Activated CD4-positive, alpha-beta memory T cell treated with anti-CD3 and anti-CD28 coated beads for 36 hours (primary cell): ENCODE measurements at regions of chrX and their contacts with region 1.

Region 1: DNA sequence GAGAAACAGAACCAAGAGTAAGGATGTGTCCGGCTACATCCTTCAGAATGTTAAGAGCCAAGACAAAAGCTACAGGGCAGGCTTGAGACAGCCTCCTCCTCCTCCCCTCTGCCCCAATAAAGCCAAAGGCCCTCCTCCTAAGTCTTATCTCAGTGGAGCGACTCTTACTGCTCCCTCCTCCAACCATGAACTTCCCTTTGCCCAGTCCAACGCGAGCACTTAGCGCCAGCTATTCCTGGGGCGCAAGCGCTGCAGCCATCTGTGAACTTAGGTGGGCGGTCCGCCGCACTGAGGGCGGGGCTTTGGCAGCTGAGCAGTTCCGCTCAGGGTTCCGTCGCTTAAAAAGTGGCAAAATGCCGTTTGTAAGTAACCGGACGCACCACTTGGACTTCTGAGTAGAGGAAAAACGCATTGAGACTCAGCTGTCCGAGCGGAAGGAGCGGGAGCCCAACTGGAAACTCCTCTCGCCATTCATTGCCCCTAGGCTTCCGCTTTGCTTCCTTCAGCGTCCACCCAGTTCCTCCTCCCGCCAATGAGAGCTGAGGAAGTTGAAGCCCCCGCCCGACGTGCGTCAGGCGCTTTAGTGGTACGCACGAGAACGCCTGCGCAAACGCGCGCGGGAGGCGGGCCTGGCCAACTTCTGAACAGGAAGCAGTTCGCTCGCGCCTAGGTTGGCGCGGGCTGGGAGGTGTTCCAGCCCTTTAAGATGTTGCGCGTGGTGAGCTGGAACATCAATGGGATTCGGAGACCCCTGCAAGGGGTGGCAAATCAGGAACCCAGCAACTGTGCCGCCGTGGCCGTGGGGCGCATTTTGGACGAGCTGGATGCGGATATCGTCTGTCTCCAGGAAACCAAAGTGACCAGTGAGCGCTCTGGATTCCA is at the start of gene APEX2:
- DNase-seq: peak; percentile 92
- H3K4me3 Mint-ChIP-seq: peak within 1 kb of the TSS; percentile 92
- H3K27ac Mint-ChIP-seq: peak within 1 kb of the TSS; percentile 87
- H3K4me1 Mint-ChIP-seq: peaks cover 17% of the 10 kb centered on the region
- H3K27me3 Mint-ChIP-seq: no peaks in the 10 kb centered on the region
- total RNA-seq, gene APEX2: 32.7 to 32.9 TPM

Region 2: DNA sequence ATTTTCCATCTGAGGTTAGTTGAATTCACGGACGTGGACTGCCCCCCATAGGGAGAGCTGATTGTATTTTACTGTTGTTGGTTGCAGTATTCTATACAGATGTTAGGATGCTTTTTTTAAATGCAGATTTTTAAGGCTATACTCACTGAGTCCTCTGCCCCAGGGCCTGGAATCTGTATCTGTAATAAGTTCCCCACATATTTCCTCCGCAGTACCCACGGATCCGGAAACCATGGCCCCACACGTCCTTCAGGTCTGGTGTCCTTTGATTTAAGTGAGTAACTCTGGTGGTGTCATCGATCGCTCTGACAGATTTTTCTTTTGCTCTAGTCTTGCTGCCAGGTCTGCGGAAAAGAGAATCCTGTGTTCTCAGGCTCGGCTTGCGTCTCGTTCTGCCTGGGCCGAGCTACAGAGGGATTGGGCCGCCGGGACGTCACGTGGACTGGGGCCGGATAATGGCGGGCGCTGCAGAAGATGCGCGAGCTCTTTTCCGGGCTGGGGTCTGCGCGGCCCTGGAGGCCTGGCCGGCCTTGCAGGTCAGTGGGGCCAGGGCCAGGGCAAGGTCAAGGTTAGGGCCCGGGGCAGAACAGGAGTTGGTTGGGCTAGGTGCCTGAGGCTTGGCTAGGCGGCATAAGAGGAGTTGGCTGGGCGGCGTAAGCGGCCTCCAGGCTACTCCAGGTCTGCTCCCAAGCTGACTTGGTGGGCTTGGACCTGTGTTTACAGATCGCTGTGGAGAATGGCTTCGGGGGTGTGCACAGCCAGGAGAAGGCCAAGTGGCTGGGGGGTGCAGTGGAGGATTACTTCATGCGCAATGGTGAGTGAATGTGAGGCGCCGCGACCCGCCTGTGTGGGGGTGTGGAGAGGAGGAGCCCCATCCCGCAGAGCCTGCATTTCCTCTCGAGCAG is 559.7 kb before region 1 on chrX and contains the start of gene TSR2:
- CTCF ChIA-PET with region 1: no interaction called
- POLR2A ChIA-PET with region 1: no interaction called
- intact Hi-C with region 1: loop called (anchors 10 kb)
- DNase-seq: peak; percentile 88
- H3K4me3 Mint-ChIP-seq: peak within 1 kb of the TSS; percentile 90
- H3K27ac Mint-ChIP-seq: peak within 1 kb of the TSS; percentile 78
- H3K4me1 Mint-ChIP-seq: peaks cover 26% of the 10 kb centered on the region
- H3K27me3 Mint-ChIP-seq: no peaks in the 10 kb centered on the region
- total RNA-seq, gene TSR2: 24.1 to 25.4 TPM

Region 3: DNA sequence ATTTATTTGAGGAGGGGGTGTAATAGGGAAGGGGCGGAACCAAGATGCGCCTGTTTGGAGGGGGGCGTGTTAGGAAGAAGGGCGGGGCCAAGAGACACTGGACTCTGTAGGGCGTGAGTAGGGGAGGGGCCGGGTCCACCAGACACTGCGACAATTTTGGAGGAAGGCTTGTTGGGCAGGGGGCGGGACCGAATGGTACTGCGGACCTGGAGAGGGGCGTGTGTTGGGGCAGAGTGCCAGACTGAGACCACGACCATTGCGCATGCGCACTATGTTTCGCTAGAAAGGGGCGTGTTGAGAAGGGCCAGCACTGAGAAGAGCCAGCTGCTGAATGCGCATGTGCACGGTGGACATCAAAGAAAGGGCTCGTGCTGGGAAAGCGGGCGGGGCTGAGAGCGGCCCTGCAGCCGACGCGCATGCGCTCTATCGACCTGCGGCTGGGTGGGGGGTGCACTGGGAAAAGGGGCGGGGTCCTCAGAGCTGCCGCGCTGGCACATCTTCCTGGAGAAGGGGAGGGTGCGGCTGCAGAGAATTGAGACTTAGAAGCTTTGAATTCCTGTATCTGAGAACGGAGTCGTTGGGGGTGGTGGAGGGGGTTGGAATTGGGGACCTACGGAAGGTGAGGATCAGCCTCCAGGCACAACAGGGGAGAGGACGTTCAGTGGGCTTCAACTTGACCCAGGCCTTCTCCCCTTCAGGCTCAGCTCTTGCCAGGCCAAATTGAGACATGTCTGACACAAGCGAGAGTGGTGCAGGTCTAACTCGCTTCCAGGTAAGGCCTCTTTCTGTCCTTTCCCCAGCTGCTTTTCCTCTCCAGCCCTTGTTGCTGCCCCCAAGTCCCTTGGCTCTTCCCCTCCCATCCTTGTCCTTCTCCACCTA is 191.1 kb before region 1 on chrX:
- CTCF ChIA-PET with region 1: no interaction called
- POLR2A ChIA-PET with region 1: no interaction called
- intact Hi-C with region 1: loop called (anchors 5 kb)
- DNase-seq: peak; percentile 94
- H3K4me3 Mint-ChIP-seq: peak overlapping the region; percentile 90
- H3K27ac Mint-ChIP-seq: peak overlapping the region; percentile 90
- H3K4me1 Mint-ChIP-seq: peaks cover 13% of the 10 kb centered on the region
- H3K27me3 Mint-ChIP-seq: peaks cover 2% of the 10 kb centered on the region

Region 4: DNA sequence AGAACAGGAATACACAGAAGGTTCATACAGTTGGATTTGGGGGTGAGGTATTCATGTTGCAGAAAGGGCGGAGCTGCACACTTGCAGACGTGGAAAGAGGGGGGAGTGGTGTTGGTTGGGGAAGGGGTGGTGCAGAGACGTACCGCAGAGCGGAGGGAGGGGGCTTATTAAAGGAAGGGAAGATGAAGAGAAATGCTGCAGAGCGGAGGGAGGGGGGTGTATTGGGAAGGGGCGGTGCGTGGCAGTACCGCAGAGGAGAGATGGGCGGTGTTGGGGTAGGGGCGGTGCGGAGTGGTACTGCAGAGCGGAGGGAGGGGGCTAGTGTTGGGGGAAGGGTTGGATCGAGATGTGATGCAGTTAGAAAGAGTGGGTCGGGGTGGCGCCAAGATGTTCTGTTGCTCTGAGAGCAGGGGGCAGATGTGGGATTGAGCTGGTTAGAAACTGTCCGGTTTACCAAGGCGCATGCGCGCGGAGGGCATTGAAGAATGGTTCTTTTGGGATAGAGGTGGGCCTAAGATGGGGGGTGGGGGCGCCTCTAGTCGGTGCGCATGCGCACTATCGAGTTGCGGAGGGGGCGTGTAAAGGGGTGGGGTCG is 78.4 kb before region 1 on chrX:
- CTCF ChIA-PET with region 1: no interaction called
- POLR2A ChIA-PET with region 1: no interaction called
- intact Hi-C with region 1: loop called (anchors 5 kb)
- DNase-seq: peak; percentile 67
- H3K4me3 Mint-ChIP-seq: peak overlapping the region; percentile 82
- H3K27ac Mint-ChIP-seq: no peak overlapping the region
- H3K4me1 Mint-ChIP-seq: peaks cover 11% of the 10 kb centered on the region
- H3K27me3 Mint-ChIP-seq: peaks cover 3% of the 10 kb centered on the region

Region 5: GRCh38 chrX:55057675-55058249 is 57.8 kb after region 1 on chrX:
- CTCF ChIA-PET with region 1: interaction called, 8 read pairs
- POLR2A ChIA-PET with region 1: no interaction called
- intact Hi-C with region 1: loop called (anchors 1 kb)
- DNase-seq: peak; percentile 23
- H3K4me3 Mint-ChIP-seq: peak overlapping the region; percentile 35
- H3K27ac Mint-ChIP-seq: no peak overlapping the region
- H3K4me1 Mint-ChIP-seq: peaks cover 18% of the 10 kb centered on the region
- H3K27me3 Mint-ChIP-seq: no peaks in the 10 kb centered on the region